ENCODE measurements at regions of chr1 and their contacts with region 1.

Region 1: DNA sequence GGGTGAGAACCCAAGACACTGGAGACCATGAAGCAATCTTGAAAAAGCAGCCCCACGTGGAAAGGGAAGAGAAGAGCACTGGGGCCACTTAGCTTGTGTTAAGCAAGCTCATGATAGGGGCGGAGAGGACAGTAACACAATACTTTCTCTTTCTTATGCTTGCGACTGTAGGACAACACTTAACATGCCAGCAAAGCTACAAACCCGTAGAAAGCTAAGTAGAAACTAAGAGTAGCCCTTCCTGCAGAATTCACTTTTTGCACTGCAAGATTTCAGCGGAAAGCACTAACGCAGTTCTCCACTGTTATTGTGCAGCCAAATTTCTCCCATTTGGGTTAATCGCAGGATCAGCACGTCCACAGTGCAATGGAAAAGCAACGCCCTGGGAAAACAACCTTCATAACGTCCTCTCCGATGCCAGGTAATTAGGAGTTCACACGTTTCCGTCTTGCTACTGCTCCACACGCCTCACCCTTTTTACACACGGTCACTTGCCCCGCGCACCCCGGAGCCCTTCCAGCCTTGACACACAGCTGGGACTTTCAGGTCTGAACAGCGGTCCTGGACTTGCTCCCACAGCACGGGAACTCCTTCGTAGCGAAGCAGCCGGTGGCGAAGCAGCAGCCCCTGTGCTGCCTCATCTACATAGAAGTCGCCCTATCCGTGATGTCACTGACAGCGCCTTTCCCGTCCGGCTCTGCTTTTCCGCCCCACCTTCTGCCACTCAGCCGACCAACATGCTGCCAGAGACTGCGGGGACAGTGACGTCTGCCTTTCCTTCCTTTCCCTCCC is 148.6 kb downstream of the PPIAL4G start:
- DNase-seq: peak; percentile 98
- ATAC-seq: peak; percentile 87
- H3K4me3 ChIP-seq: peak overlapping the region; percentile 75
- H3K27ac ChIP-seq: peak overlapping the region; percentile 97
- H3K4me1 ChIP-seq: peaks cover 28% of the 10 kb centered on the region
- H3K27me3 ChIP-seq: no peaks in the 10 kb centered on the region
- CTCF ChIP-seq: 0 out of 2 replicates have a peak, but pooled peaks have one; percentile 8

Region 2: DNA sequence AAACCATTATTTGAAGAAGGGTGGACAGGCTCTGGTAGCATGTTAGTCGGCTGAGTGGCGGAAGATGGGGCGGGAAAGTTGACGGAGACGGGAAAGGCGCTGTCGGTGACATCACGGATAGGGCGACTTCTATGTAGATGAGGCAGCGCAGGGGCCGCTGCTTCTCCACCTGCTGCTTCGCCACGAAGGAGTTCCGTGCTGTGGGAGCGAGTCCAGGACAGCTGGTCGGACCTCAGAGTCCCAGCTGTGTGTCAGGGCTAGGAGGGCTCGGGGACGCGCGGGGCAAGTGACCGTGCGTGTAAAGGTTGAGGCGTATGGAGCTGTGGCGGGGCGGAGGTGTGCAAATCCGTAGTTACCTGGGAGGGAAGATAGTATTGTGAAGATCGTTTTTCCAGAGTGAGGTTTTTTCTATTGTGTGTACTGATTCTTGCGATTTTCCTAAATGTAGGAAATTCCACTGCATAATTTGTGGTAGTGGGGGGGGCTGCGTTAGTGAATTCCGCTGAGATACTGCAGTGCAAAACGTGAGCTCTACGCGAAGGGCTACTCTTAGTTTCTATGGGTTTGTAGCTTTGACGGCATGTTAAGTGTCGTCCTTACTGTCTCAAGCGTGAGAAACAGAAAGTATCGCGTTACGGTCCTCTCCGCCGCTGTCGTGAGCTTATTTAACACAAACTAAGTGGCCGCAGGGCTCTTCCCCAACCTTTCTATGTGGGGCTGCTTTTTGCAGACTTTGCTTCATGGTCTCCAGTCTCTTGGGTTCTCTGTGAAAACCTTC is 71.2 kb before region 1 on chr1:
- CTCF ChIA-PET with region 1: interaction called, 7 read pairs
- POLR2A ChIA-PET with region 1: interaction called, 71 read pairs
- intact Hi-C with region 1: loop called (anchors 5 kb)
- DNase-seq: peak; percentile 98
- ATAC-seq: peak; percentile 88
- H3K4me3 ChIP-seq: peak overlapping the region; percentile 70
- H3K27ac ChIP-seq: peak overlapping the region; percentile 89
- H3K4me1 ChIP-seq: 0 out of 2 replicates have a peak, but pooled peaks cover 5% of the 10 kb centered on the region
- H3K27me3 ChIP-seq: no peaks in the 10 kb centered on the region
- CTCF ChIP-seq: no peak

Region 3: DNA sequence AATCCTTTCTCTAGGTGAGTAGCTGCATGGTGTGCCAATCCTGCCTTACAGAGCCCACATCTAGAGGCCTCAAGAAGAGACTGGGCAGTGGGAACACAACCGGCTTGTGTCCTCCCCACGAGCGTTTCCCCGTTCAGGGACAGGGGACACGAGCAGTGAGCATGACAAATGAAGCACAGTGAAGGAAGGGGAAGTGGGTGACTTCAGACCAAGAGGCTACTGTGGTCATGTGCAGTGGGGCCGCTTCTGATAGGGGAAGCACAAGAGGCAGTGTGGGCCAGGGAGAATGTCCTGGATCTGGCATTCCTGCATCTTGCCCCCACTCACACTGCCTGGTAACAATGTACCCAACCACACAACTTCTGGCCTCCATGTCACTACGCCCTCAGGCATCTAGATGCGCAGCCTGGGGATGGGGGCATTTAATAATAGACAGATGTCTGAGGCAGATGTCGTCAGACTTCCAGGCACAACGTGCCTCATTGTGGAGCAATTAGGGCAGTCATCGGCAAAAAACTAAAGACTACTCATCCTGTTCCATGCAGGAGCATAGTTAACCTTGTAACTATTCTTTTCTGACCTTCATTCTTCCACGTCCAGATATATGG is 26.8 kb before region 1 on chr1:
- CTCF ChIA-PET with region 1: no interaction called
- POLR2A ChIA-PET with region 1: interaction called, 12 read pairs
- intact Hi-C with region 1: no loop called
- DNase-seq: no peak
- ATAC-seq: no peak
- H3K4me3 ChIP-seq: no peak overlapping the region
- H3K27ac ChIP-seq: no peak overlapping the region
- H3K4me1 ChIP-seq: no peaks in the 10 kb centered on the region
- H3K27me3 ChIP-seq: no peaks in the 10 kb centered on the region
- CTCF ChIP-seq: no peak

Region 4: GRCh38 chr1:148357037-148357436 is 22.5 kb after region 1 on chr1:
- CTCF ChIA-PET with region 1: no interaction called
- POLR2A ChIA-PET with region 1: interaction called, 20 read pairs
- intact Hi-C with region 1: no loop called
- DNase-seq: no peak
- ATAC-seq: no peak
- H3K4me3 ChIP-seq: no peak overlapping the region
- H3K27ac ChIP-seq: no peak overlapping the region
- H3K4me1 ChIP-seq: peaks cover 4% of the 10 kb centered on the region
- H3K27me3 ChIP-seq: no peaks in the 10 kb centered on the region
- CTCF ChIP-seq: no peak